ENCODE measurements at regions of chr12 and their contacts with region 1.

Region 1: GRCh38 chr12:109264095-109264942 is 44.8 kb downstream of the FOXN4 start:
- DNase-seq: peak; percentile 90

Region 2: DNA sequence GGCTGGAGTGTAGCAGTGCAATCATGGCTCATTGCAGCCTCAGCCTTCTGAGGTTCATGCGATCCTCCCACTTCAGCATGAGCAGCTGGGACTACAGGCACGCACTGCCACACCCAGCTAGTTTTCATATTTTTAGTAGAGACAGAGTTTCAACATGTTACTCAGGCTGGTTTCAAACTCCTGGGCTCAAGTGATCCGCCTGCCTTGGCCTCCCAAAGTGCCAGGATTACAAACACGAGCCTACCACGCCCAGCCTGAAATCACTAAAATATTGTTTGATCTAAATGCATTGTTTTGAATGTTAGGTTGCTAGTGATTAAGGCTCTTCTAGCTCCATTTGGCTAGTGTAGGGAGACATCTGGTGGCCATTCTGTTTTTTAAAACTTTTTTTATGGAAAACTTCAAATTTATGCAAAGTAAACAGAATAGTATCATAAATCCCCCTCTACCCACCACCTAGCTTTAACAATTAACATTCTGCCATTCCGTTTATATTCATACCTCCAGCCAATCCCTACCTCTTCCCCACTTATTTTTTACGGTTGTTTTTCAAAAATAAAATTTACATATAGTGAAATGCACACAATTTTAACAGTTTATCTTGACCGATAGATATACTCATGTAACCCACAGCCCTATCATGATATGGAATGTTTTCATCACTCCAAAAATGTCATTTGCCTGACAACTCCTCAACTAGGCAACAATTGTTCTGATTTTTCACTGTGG is 121.2 kb after region 1 on chr12:
- intact Hi-C with region 1: loop called (anchors 5 to 10 kb)
- DNase-seq: no peak

Region 3: DNA sequence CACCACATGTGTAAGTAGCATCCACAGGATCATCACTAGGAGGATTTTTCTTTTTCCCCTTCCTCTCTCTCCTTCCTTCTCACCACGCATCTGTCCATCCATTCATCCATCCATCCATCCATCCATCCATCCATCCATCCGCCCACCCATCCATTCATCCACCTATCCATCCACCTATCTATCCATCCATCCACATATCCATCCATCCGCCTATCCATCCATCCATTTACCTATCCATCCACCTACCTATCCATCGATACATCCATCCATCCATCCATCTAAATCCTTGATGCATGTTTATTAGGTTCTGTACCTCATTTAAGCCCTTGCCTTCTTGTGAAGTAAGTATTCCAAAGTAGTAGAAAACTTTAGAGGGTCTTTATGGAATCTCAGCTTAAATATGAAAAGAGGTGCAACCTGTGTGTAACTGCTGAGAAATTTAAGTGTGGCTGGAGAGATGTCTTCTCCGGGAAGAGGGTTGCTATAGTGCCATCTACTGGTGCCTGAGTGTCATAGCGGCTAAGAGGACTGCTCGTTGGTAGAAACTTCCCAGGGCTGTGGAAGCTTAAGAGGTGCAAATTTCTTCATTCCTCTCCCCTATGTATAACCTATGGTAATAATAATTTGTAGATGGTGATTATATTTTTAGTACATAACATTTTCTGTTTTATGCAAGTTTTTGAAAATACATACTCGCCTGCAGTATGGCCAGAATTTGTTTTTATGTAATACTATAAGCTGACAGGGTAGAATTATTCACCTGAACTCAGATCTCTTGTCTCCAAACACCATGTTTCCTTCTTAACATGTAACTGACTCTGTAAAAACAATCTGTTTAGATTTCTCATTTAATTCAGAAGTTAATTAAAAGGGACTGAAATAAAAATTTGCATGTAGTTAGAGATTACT is 129.4 kb after region 1 on chr12:
- intact Hi-C with region 1: loop called (anchors 5 to 10 kb)
- DNase-seq: no peak